Activated CD8-positive, alpha-beta memory T cell treated with anti-CD3 and anti-CD28 coated beads, Interleukin-2, amount 10 ng/mL, durations not matched to agents 7 days and 5 days (primary cell): ENCODE measurements at regions of chr16 and their contacts with region 1.

Region 1: GRCh38 chr16:75402821-75403475 is 30.4 kb downstream of the CFDP1 start:
- DNase-seq: no peak
- ATAC-seq: peak; percentile 64
- H3K4me3 Mint-ChIP-seq: no peak overlapping the region
- H3K27ac Mint-ChIP-seq: no peak overlapping the region
- H3K4me1 Mint-ChIP-seq: peaks cover 3% of the 10 kb centered on the region
- H3K27me3 Mint-ChIP-seq: no peaks in the 10 kb centered on the region

Region 2: GRCh38 chr16:75385507-75386152 is 17.3 kb before region 1 on chr16:
- CTCF ChIA-PET with region 1: interaction called, 10 read pairs
- DNase-seq: no peak
- ATAC-seq: peak; percentile 47
- H3K4me3 Mint-ChIP-seq: no peak overlapping the region
- H3K27ac Mint-ChIP-seq: no peak overlapping the region
- H3K4me1 Mint-ChIP-seq: peaks cover 5% of the 10 kb centered on the region
- H3K27me3 Mint-ChIP-seq: peaks cover 16% of the 10 kb centered on the region

Region 3: DNA sequence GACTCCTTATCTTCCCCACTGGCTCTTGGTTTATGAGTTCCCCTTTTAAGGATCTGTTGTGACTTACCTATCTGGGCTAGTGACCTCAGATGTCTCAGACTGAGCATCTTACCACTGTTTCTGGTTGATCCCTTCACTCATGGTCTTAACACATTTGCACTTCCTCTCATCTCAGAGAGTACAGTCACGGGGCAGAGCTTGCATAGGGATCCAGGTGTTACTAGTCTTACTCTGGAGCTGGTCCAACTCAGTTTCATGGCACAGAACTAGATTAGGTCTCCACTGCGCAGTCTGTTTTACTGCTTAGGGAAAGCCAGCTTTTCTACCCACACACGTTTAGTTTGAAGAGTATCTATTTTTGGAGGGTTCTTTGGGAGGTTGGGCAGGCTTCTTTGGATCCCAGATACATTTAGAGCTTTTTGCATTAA is 173.4 kb after region 1 on chr16:
- CTCF ChIA-PET with region 1: no interaction called
- DNase-seq: no peak
- ATAC-seq: no peak
- H3K4me3 Mint-ChIP-seq: no peak overlapping the region
- H3K27ac Mint-ChIP-seq: no peak overlapping the region
- H3K4me1 Mint-ChIP-seq: peaks cover 17% of the 10 kb centered on the region
- H3K27me3 Mint-ChIP-seq: no peaks in the 10 kb centered on the region